ENCODE measurements at regions of chr4 and their contacts with region 1.

Region 1: DNA sequence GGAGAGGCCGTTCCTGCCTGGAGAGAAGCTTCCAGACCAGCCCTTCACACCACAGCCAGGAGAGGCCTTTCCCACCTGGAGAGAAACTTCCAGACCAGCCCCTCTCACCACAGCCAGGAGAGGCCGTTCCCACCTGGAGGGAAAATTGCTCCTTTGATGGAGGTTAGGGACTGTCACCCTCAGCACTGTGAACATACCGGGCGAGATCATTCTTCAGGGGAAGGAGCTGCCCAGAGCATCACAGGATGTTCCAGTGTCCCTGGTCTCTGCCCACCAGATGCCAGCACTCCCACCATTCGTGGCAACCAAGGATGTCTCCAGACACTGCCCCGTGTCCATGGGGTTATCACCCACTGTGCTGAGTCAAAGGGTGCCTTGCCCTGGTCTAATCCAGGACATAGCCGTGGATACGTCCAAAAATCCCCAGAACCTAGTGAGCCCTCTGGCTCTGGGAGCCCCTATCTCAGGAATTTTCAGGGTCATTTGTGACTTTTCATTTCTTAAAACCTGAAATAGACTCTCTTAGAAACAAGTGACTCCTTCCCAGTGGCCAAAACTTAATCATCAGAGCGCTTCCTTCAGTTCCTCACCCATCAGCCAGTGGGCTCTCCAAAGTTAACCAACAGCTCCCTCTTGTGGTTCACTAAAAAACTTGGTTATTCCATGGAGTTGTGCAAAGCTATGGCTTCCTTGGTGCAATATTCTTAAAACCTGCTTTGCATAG is 80.2 kb downstream of the CRMP1 start:
- DNase-seq: peak; percentile 54

Region 2: DNA sequence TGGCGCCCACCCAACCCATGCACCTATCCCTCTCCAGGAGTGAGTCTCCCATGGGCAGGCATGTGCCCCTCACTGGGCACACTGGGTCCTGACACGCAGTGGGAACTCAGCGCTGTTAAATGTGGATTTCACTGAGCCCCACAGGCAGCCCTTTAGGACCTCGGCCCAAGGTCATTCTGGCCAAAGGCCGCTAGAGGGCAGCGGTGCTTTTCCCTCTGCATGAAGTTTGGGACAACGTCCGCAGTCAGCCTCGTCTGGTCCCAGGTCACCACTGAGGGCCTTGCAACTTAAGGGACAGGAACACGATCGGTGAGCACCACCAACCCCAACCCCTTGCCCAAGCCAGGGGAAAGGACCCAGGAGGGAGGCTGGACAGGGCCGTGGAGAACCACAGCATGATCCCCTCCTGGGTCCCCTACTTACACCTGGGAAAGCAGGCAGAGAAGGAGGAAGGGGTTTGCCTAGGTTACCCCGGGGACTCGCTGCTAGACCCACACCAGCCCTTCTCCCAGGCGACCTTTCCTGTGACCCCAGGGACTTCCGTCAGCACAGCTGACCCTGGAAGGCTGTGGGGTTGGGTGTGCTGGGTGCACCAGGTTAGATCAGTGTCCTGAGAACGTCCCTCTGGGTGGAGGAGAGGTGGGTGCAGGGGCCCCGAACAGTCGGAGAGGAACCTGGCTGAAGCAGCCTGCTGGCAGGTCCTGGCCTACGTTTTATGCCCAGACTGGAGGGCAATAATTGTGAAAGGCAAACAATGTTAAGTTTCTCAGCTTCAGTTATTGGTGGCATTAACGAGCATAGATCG is 817.4 kb before region 1 on chr4:
- intact Hi-C with region 1: loop called in 1 of 2 experiments (anchors 10 kb)
- DNase-seq: peak; percentile 93

Measured in posterior vena cava (tissue), 2 donors.